ENCODE measurements at regions of chr9 and their contacts with region 1.

Region 1: DNA sequence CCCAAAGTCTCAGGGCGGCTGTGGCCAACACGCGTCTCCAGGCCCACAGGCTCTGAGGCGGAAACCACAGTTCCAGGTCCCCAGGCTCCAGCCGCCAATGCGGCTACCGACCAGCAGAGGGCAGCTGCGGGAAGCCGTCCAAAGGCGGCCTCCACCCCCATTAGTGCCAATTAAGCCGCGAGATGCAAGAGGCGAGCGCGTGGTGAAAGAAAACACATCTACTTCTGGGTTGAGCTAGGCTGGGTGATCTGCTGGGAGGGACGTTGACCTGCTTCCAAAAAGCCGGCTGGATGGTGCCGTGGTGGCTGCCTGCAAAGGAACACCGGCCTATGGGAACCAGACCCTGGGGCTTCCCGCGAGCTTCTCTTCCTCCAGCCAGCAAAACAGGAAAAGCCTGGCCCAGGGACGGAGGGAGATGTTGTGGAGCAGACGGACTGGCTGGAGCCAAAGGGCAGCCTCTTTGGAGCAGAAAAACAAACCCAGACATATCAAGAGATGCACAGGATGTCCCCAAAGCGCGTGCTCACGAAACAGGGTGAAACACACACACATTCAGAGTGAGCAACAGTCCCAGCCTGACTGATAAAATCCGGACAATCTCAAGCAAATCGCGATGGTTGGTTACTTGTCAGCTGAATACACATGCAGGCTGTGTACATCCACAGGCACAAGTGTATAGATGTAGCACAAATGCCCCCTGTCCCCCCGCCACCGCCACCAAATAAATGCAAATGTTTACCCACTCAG is 187.1 kb upstream of the BRINP1 start:
- DNase-seq: peak; percentile 82
- ATAC-seq: peak; percentile 93

Region 2: DNA sequence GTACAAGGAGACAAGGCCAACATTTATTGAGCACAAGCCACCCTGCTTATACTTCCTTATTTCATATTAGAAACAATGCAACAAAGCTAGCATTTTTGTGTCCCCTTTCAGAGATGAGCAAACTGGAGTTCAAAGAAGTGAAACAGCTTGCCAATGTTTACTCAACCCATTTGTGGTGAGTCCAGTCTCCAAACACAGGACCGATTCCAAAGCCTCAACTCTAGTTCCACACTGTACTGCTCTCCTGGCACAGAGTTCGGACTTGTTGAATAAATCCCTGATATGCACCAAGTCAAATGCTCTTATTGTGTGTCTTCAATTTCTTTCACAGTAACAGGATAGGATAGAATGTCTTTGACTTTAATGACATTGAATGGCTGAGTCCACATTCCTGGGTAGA is 417.7 kb after region 1 on chr9:
- intact Hi-C with region 1: loop called (anchors 5 kb)
- DNase-seq: no peak
- ATAC-seq: no peak

Region 3: GRCh38 chr9:120348951-120349429 is 792.7 kb after region 1 on chr9:
- intact Hi-C with region 1: loop called (anchors 2 kb)
- DNase-seq: no peak
- ATAC-seq: no peak

Region 4: DNA sequence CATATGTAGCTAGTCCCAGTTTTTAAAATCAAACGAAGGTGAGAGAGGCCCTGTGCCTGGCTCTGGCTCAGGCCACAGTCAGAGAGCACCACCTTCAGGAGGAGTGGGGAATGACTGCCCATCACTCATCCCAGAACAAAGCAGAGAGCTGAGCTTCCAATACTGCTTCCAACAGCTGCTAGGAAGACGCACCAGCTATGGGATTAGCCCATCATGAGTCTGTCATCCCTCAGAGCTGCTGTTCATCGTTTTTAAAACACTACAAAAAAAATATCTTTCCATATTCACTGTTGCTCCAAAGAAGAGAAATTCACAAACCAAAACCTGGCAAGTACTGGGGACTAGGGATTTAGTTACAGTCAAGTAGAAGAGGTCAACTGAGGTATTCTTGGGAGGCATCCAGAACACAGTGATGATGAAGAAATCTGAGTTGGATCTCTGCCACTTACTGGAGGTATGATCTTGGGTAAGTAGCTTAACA is 921.3 kb after region 1 on chr9:
- intact Hi-C with region 1: loop called (anchors 5 kb)
- DNase-seq: peak; percentile 65
- ATAC-seq: peak; percentile 91